Naive thymus-derived CD4-positive, alpha-beta T cell (primary cell): ENCODE measurements at regions of chr19 and their contacts with region 1.

Region 1: DNA sequence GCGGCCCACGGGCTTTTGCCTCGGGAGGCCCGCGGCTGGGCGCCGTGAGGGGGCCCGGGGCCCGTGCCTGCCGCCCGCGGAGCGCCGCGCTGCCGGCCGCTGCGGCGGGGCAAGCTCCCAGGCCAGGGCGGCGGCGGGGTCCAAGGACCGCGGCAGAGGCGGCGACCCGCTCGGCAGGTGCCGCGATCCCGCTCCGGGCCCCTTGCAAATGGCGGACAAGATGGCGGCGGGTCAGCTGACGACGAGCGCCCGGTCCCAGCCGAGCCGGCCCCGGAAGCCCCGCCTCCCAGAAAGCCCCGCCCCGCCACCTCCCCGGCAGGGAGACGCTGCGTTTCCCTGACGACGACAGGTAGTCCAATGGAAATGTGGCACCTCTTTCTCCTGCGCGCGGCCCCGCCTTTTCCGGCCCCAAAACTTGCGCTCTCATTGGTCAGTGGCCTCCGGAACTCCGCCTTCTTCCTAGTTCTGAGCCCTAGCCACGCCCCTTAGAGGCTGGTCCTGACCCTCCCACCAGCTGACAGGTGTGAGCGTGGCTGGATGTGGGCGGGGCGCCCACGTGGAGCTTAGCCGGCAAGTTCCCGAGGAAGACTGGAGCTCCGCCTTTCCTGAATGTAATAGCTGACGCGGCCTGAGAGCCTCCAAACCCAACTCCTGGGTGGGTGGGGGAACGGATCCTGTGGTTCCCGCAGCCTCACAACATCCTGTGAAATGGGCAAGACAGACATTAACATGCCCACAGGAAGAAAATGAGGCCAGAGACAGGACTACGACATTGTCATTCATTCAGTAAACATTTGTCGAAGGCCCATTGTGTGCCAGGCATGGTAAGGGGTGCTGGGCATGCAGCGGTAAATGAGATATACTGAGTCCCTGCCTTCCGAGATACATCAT is at the start of gene AP3D1:
- DNase-seq: peak; percentile 98 to 100 (median 100)
- ATAC-seq: peak; percentile 95
- H3K4me3 ChIP-seq: peak within 1 kb of the TSS; percentile 76
- H3K4me3 Mint-ChIP-seq: peak within 1 kb of the TSS; percentile 76 to 93 (median 84)
- H3K27ac ChIP-seq: peak within 1 kb of the TSS; percentile 95
- H3K27ac Mint-ChIP-seq: peak within 1 kb of the TSS; percentile 74 to 95 (median 89)
- H3K4me1 ChIP-seq: peaks cover 19 to 29% of the 10 kb centered on the region in 2 donors
- H3K4me1 Mint-ChIP-seq: peaks cover 16 to 48% (median 41%) of the 10 kb centered on the region in 7 donors
- H3K27me3 ChIP-seq: no peaks in the 10 kb centered on the region
- H3K27me3 Mint-ChIP-seq: peaks cover 0 to 2% (median 0%) of the 10 kb centered on the region in 5 donors
- total RNA-seq, gene AP3D1: 63.7 to 106 (median 80.3) TPM

Region 2: DNA sequence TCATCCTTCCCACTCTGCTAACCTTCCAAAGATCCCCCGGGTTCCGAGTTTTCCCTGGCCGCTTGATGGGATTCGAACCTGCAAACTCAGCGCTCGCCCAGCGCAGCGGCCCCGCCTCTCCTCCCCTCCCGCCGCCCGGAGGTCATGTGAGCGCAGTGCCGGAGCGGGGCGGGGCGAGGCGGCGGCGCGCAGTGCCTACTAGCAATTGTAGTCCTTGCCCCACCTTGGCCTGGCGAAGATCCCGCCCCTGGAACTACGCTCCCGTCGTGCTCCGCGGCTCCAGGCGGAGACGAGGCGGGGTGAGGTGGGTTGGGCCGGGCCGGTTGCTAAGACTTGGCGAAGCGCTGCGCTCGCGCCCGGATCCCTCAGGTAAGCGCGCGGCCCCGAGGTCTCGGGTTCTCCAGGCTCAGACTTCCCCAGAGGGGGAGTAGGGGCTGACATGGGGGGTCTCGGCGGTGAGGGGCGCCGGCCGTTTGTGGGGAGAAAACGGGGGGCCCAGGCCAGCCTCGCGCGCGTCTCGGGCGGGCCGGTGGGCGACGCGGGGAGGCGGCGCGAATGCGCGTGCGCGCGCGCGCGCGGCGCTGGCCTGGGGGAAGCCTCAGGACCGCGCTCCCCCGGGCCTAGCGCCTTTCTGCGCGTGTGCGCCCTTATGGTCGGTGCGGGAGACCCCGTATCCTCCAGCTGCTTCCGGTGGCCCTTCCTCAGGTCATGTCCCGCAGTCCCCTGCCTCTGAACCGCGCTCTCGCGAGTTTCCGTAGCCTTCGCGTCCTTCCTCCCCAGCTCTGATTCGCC is 246.3 kb before region 1 on chr19 and contains the starts of genes ADAT3 and SCAMP4:
- CTCF ChIA-PET with region 1: no interaction called
- POLR2A ChIA-PET with region 1: no interaction called
- intact Hi-C with region 1: loop called in 1 of 2 experiments (anchors 1 kb)
- DNase-seq: peak; percentile 90 to 98 (median 97)
- ATAC-seq: peak; percentile 98
- H3K4me3 ChIP-seq: peak within 1 kb of the TSS; percentile 70
- H3K4me3 Mint-ChIP-seq: peak within 1 kb of the TSS; percentile 88 to 96 (median 92)
- H3K27ac ChIP-seq: peak within 1 kb of the TSS; percentile 75
- H3K27ac Mint-ChIP-seq: peak within 1 kb of the TSS; percentile 67 to 96 (median 92)
- H3K4me1 ChIP-seq: peaks cover 10% of the 10 kb centered on the region in 2 donors
- H3K4me1 Mint-ChIP-seq: peaks cover 13 to 57% (median 39%) of the 10 kb centered on the region in 7 donors
- H3K27me3 ChIP-seq: no peaks in the 10 kb centered on the region
- H3K27me3 Mint-ChIP-seq: no peaks in the 10 kb centered on the region
- total RNA-seq, gene ADAT3: 3.5 to 13.5 (median 6.1) TPM
- total RNA-seq, gene SCAMP4: 17.6 to 35.5 (median 23.0) TPM

Region 3: DNA sequence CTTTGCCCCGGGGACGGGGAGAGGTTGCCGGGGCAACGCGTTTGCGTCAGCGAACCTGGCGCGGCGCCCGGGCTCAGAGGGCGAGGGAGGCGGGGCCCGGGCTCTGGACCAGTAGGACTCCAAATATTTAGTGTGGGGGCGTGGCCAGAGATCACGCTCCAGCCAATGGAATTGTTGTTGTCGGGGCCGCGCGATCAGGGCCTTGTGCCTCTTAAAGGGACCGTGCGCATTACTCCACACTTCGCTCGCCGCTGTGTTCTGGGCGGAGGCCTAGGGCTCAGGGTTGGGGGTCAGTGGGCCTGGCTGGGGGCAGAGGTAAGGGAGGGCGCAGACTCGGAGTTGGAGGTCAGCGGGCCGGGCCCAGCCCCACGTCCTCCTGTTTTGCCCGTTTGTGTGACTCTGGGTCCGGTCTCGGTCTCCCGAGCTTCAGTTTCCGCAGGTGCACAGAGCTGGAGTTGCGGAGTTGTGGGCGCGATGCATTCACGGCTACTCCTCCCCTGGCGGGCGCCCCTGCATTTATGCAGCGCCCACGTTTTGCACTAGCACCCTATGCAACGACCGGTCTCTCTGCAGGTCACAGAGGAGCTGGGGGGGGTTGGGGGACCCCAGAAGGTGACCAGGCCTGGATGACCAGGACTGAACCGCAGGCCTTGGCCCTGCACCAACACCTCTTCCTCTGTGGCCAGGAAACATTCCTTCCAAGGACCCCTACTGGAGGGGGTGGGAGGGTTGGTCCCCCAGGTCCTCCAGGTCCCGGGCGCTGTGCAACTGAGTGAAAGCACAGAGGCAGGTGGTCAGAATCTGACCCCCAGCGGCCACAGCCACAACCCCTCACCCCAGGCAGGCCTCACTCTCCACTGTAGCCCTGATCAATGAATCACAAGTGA is 89.8 kb before region 1 on chr19:
- CTCF ChIA-PET with region 1: no interaction called
- POLR2A ChIA-PET with region 1: interaction called, 5 read pairs
- intact Hi-C with region 1: loop called in 1 of 2 experiments (anchors 1 kb)
- DNase-seq: peak; percentile 99 to 100 (median 100)
- ATAC-seq: peak; percentile 94
- H3K4me3 ChIP-seq: peak overlapping the region; percentile 72
- H3K4me3 Mint-ChIP-seq: peak overlapping the region; percentile 91 to 97 (median 94)
- H3K27ac ChIP-seq: peak overlapping the region; percentile 99
- H3K27ac Mint-ChIP-seq: peak overlapping the region; percentile 85 to 99 (median 97)
- H3K4me1 ChIP-seq: peaks cover 32 to 49% of the 10 kb centered on the region in 2 donors
- H3K4me1 Mint-ChIP-seq: peaks cover 20 to 60% (median 24%) of the 10 kb centered on the region in 7 donors
- H3K27me3 ChIP-seq: no peaks in the 10 kb centered on the region
- H3K27me3 Mint-ChIP-seq: no peaks in the 10 kb centered on the region

Region 4: DNA sequence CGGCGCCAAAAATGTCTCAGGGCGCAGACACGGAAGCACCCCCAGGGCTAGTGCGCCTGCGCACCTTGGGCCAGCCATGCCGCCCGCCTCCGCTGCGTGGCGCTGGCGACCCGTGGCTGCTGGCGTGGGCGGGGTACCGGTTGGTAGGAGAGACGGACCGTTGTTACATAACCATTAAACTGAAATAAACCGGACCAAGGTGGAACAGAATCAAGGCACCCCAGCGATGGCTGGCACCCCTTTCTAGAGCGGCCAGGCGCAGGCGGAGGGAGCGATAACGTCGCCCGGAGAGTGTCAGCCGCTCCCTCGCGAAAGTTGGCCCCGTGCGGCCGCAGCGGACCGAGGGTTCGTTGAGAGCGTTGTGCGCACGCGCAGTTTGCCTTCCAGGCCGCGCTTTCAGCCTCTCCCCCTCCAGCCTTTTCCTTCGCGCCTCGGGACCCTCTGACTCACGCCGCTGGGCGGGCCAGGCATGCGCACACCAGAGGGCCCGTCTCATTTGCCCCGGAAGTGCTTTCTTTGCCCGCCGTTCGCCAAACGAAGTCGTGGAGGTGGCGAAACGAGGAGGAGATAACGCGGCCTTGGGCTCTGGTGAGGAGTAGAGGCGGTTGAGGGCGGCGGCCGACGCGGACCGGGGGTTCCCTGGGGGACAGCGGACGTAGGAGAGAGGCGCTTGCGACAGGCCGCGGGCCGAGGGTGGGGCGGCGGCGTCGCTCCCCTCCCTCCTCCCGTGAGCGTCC is 84.9 kb after region 1 on chr19 and contains the starts of genes PLEKHJ1 and SF3A2:
- CTCF ChIA-PET with region 1: interaction called, 4 read pairs
- POLR2A ChIA-PET with region 1: interaction called, 6 read pairs
- intact Hi-C with region 1: loop called (anchors 1 kb)
- DNase-seq: peak; percentile 96 to 100 (median 100)
- ATAC-seq: peak; percentile 90
- H3K4me3 ChIP-seq: peak within 1 kb of the TSS; percentile 75
- H3K4me3 Mint-ChIP-seq: peak within 1 kb of the TSS; percentile 96 to 100 (median 98)
- H3K27ac ChIP-seq: peak within 1 kb of the TSS; percentile 93
- H3K27ac Mint-ChIP-seq: peak within 1 kb of the TSS; percentile 96 to 99 (median 98)
- H3K4me1 ChIP-seq: peaks cover 42 to 50% of the 10 kb centered on the region in 2 donors
- H3K4me1 Mint-ChIP-seq: peaks cover 41 to 69% (median 57%) of the 10 kb centered on the region in 7 donors
- H3K27me3 ChIP-seq: no peaks in the 10 kb centered on the region
- H3K27me3 Mint-ChIP-seq: peaks cover 0 to 5% (median 0%) of the 10 kb centered on the region in 5 donors
- total RNA-seq, gene PLEKHJ1: 32.9 to 65.0 (median 50.2) TPM
- total RNA-seq, gene SF3A2: 131 to 150 (median 133) TPM

Region 5: DNA sequence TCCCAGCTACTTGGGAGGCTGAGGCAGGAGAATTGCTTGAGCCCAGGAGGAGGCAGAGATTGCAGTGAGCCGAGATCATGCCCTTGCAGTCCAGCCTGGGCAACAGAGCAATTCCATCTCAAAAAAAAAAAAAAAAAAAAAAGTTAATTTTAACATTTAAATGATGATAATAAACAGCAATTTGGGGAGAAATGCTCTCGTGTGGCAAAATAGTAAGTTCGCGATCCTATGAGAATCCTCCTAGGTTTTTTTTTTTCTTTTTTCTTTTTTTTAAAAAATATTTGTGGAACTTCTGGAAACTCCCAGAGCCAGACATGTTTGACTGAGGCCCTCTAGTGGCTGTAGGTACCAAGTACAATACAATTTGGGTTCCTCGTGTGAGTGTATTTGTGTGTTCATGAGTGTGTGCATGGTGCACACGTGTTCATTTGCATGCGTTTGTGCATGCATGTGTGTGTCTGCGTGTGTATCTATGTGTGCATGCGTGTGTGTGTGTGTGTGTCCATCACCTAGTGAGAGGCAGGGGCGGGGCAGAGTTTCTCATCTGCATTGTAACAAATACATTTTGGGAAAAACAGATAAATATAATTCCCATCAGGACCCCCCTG is 239.6 kb after region 1 on chr19:
- CTCF ChIA-PET with region 1: interaction called, 4 read pairs
- POLR2A ChIA-PET with region 1: no interaction called
- intact Hi-C with region 1: loop called (anchors 1 kb)
- DNase-seq: peak in 7 of 9 donors; percentile 26 to 59 (median 46)
- ATAC-seq: peak; percentile 88
- H3K4me3 ChIP-seq: no peak overlapping the region
- H3K4me3 Mint-ChIP-seq: no peak overlapping the region
- H3K27ac ChIP-seq: no peak overlapping the region
- H3K27ac Mint-ChIP-seq: peak overlapping the region in 2 of 9 donors; percentile 1 to 91
- H3K4me1 ChIP-seq: no peaks in the 10 kb centered on the region
- H3K4me1 Mint-ChIP-seq: peaks cover 4 to 16% (median 5%) of the 10 kb centered on the region in 7 donors
- H3K27me3 ChIP-seq: no peaks in the 10 kb centered on the region
- H3K27me3 Mint-ChIP-seq: peaks cover 0 to 13% (median 0%) of the 10 kb centered on the region in 5 donors

Region 6: DNA sequence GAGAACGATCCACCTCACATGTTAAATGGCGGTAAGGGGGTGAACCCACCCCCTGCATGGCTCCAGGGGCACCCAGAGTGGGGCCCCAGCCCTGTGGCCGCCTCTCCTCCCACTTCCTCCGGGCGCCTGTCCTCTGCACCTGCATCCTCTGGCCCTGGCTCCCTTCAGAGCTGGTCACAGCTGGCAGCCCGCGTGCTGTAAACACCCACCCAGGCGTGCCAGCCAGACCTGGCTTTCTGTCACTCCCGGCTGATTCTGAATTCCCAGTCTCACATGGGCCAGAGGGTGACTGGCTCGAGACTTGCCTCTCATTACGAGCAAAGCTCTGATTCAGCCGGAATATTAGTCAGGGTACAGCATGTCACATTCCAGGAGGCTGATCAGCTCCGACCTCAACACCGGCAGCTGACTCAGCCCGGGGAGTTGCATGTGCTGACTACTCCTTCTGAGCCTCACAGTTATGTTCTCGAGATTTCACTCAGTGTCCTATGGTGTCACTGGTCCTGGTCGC is 475.8 kb after region 1 on chr19:
- CTCF ChIA-PET with region 1: no interaction called
- POLR2A ChIA-PET with region 1: no interaction called
- intact Hi-C with region 1: loop called in 1 of 2 experiments (anchors 5 kb)
- DNase-seq: no peak
- ATAC-seq: peak; percentile 78
- H3K4me3 ChIP-seq: no peak overlapping the region
- H3K4me3 Mint-ChIP-seq: peak overlapping the region in 1 of 10 donors; percentile 42
- H3K27ac ChIP-seq: no peak overlapping the region
- H3K27ac Mint-ChIP-seq: peak overlapping the region in 6 of 9 donors; percentile 42 to 85 (median 80)
- H3K4me1 ChIP-seq: peaks cover 15 to 25% of the 10 kb centered on the region in 2 donors
- H3K4me1 Mint-ChIP-seq: peaks cover 13 to 68% (median 44%) of the 10 kb centered on the region in 7 donors
- H3K27me3 ChIP-seq: no peaks in the 10 kb centered on the region
- H3K27me3 Mint-ChIP-seq: no peaks in the 10 kb centered on the region